ENCODE measurements at regions of chr3 and their contacts with region 1.

Region 1: DNA sequence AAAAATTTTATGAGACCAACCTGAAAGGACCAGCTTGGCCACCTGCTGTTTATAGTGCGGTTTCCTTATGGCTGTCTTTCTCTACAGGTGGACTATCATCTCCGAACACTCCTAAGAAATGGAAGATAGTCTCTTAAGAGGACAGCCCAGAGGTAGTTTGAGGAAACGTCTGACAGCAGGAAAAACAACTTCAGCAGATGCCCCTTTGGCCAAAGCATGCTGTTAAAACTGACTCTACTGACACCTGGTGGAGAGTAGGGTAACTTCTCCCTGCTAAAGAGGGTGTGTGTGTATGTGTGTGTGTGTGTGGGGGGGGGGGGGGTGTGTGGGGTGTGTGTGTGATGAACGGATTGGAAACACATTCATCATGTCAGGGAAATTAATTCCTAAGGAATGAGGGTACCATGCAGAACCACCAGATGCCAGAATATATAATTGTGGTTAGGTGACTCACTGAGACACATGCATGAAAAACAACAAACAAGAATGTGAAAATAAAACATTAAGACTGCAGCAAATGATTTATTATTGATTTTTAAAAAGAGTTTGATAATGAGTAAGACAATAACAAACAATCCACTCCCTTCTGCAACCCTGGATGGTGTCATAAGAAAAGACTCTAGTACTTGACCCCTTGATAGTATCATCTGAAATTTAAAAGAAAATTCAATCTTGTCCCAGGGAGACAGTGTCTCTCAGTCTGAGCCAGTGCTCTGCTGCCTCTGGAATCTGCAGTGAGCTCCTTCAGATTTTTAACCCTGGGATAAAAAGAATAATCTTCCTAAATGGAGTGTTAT is 256.5 kb downstream of the THRB start:
- DNase-seq: no peak
- ATAC-seq: peak; percentile 70
- H3K4me3 ChIP-seq: no peak overlapping the region
- H3K27ac ChIP-seq: peak overlapping the region; percentile 94 to 95
- H3K4me1 ChIP-seq: peaks cover 11 to 15% of the 10 kb centered on the region in 2 donors
- H3K27me3 ChIP-seq: no peaks in the 10 kb centered on the region

Region 2: GRCh38 chr3:22951910-22952309 is 1286.3 kb before region 1 on chr3:
- intact Hi-C with region 1: no loop called
- DNase-seq: no peak
- ATAC-seq: peak; percentile 72
- H3K4me3 ChIP-seq: no peak overlapping the region
- H3K27ac ChIP-seq: no peak overlapping the region
- H3K4me1 ChIP-seq: no peaks in the 10 kb centered on the region
- H3K27me3 ChIP-seq: no peaks in the 10 kb centered on the region

Region 3: DNA sequence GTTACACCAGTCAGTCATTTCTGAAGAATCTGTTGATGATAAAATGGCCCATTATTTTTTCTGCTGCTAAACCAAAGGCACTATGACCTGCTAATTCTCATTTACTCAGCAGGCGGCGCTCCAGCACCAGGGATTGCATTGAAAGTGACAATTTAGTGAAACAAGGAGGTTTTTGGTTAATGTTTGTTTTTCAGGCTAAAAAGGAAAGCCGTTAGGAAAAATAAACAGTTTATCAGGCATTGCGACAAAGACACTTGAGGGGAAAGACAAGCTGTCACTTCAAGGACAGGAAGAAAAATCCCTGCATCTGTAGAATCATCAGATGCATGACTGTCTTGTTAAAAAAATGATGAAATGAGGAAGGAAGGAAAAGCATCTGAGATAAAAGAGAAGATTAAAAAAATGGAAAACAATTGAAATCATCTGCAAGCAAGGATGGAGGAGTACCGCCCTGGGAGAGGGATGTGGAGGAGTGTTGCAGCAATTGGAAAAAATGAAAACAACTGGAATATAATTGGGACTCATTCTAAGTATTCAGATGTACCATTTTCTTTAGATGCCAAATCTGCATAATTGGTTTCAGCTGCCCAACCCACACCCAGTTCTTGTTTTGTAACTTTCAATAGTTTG is 239.0 kb before region 1 on chr3:
- intact Hi-C with region 1: loop called (anchors 1 to 5 kb)
- DNase-seq: peak; percentile 76 to 91
- ATAC-seq: peak; percentile 66
- H3K4me3 ChIP-seq: no peak overlapping the region
- H3K27ac ChIP-seq: no peak overlapping the region
- H3K4me1 ChIP-seq: peaks cover 0 to 5% of the 10 kb centered on the region in 2 donors
- H3K27me3 ChIP-seq: no peaks in the 10 kb centered on the region

Region 4: DNA sequence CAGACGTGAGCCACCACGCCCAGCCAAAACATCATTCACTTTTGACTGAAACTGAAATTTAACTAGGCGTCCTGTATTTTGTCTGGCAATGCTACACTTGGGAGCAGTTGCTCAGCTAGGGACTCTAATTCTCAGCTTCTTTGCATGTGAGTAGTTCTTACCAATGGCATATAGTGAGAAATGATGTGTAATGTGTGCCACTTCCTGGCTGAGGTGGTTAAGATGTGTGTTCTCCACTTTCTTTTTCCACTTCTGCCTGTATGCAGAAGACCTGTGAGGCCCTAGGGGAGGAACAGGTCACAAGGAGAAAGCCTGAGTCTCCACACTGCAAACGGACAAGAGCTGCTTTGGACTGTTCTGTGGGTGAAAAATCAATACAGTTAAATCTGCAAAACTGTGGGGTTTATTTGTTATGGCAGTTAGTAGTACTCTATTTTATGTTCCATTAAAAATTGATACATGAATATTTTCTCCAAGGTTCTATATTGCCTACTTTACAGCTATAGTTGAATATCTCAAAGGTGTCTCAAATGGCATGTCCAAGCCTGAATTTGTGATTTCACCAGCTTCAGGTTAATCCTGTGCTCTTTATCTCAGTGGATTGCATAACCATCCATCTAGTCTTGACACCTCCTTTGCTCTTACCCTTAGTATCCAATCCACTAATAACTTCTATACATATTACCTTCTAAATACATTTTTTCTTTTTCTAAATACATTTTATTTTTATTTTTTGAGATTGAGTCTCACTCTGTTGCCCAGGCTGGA is 233.8 kb before region 1 on chr3:
- intact Hi-C with region 1: loop called (anchors 1 to 5 kb)
- DNase-seq: no peak
- ATAC-seq: no peak
- H3K4me3 ChIP-seq: no peak overlapping the region
- H3K27ac ChIP-seq: no peak overlapping the region
- H3K4me1 ChIP-seq: peaks cover 0 to 3% of the 10 kb centered on the region in 2 donors
- H3K27me3 ChIP-seq: no peaks in the 10 kb centered on the region

Region 5: DNA sequence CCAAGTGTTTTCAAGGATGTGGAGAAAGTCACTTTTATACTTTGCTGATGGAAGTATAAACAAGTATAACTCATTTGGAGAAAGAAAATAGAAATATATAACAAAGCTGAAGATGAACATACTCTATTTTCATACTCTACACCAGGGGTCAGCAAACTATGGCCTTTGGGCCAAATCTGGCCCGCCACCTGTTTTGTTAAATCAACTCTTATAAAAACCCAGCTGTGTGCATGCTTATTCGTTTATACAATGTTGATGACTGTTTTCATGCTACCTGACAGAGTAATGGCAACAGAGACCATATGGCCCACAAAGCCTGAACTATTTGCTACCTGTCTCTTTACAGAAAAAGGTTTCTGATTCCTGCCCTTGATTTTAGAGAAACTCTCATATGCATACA is 169.1 kb before region 1 on chr3:
- intact Hi-C with region 1: loop called (anchors 5 kb)
- DNase-seq: no peak
- ATAC-seq: no peak
- H3K4me3 ChIP-seq: no peak overlapping the region
- H3K27ac ChIP-seq: no peak overlapping the region
- H3K4me1 ChIP-seq: no peaks in the 10 kb centered on the region
- H3K27me3 ChIP-seq: no peaks in the 10 kb centered on the region

Region 6: DNA sequence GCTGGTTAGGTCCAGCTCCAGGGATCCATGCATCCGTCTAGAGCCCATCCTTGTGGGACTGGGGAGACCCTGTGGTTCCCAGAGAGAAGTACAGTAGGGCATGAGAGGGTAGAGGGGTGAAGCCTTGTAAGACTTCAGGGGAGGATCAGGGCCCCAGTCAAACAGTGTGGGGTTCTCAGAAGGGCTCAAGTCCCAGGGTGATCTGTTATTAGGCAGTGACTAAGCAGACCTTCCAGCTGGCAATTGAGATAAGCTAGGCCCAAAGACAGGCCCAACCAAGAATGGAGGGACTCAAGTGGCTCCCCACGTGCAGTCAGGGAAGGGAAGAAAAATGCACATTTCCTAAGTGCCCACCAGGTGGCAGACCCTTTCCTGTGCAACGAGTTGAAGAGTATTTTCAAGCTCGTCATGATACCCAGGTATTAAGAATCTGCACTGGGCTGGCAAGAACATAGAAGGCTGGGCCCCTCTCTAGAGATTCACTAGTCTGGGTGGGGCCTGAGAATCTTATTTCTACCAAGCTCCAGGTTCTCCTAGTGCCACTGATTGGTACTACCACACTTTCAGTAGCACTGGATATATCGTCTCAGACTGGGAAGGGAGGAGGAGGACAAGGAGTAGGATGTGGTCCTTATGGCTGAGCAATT is 52.3 kb before region 1 on chr3:
- intact Hi-C with region 1: loop called (anchors 5 to 10 kb)
- DNase-seq: peak in 1 of 2 donors; percentile 57
- ATAC-seq: peak; percentile 68
- H3K4me3 ChIP-seq: no peak overlapping the region
- H3K27ac ChIP-seq: peak overlapping the region; percentile 44 to 72
- H3K4me1 ChIP-seq: peaks cover 4 to 5% of the 10 kb centered on the region in 2 donors
- H3K27me3 ChIP-seq: no peaks in the 10 kb centered on the region

Region 7: DNA sequence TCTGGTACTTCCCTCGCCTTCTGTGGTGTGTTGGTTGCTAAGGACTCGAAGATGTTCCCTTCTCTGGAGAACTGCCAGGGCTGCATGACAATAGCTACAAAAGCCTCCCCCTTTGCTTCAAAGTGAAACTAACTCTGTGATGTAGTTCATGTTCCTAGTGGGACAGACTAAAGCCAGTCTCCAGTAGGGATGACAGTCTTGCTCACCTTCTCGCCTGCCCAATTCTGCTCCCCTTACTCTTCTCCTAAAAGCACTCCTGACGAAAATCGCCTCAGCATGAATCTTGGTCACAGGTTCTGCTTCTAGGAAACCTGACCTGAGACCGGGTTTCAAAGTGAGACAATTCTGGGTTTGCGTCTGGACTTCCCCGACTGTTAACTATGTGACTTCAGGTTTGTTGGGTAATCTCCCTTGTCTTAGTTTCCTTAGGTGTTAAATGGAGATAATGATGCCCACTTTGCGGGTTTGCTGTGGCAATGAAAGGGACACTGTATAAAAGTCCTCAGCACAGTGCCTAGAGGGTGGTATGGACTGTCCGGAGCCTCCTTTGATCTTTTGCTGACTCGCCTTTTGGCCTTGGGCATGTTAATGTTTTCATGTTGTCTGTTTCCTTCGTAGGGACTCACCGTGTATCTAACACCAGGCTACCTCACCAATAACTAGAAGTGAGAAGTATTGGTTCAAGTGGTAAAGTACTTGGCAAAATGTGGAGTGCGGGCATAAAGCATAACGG is 281.4 kb after region 1 on chr3:
- intact Hi-C with region 1: no loop called
- DNase-seq: no peak
- ATAC-seq: no peak
- H3K4me3 ChIP-seq: no peak overlapping the region
- H3K27ac ChIP-seq: no peak overlapping the region
- H3K4me1 ChIP-seq: peaks cover 0 to 3% of the 10 kb centered on the region in 2 donors
- H3K27me3 ChIP-seq: no peaks in the 10 kb centered on the region

Region 8: DNA sequence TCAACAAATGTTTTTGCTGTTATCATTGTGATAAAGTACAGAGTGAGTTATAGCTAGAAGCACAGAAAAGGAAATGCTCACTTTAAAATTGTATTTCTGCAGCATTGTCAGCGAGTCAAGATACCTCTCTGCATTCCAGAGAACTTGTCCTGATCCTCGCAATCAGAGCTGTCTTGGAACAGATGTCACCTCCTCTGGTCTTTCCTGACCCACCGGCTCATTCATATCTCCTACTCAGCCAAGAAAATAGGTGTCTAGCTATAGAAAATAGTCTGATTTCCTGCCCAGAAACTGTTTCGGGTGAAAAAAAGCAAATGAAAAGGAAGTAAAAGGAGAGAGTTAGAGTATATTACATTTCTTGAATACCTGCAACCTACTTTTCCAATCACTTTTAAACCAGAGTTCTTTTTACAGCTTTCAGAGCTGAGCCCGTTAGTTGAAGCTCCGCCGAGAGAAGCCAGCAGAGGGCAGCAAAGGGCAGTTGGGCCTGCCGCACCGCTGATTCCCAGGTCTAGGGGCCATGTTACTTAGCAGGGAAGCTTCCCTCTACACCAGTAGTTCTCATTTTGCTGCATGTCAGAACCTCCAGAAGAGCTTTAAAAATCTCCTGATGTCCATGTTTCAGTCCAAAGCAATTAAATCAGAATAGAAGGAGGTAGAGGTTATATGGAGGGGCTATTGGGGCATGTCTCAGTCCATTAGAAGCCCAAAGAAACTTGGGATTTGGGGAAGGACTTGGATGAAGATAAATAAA is 442.2 kb after region 1 on chr3:
- intact Hi-C with region 1: loop called in 1 of 2 experiments (anchors 10 kb)
- DNase-seq: peak; percentile 79 to 93
- ATAC-seq: peak; percentile 78
- H3K4me3 ChIP-seq: no peak overlapping the region
- H3K27ac ChIP-seq: no peak overlapping the region
- H3K4me1 ChIP-seq: peaks cover 0 to 2% of the 10 kb centered on the region in 2 donors
- H3K27me3 ChIP-seq: peaks cover 0 to 2% of the 10 kb centered on the region in 2 donors

Region 9: GRCh38 chr3:25471081-25471768 is 1233.1 kb after region 1 on chr3:
- intact Hi-C with region 1: loop called in 1 of 2 experiments (anchors 10 kb)
- DNase-seq: no peak
- ATAC-seq: no peak
- H3K4me3 ChIP-seq: no peak overlapping the region
- H3K27ac ChIP-seq: no peak overlapping the region
- H3K4me1 ChIP-seq: peaks cover 0 to 3% of the 10 kb centered on the region in 2 donors
- H3K27me3 ChIP-seq: no peaks in the 10 kb centered on the region

Measured in aorta (tissue), 5 donors.